Activated naive CD4-positive, alpha-beta T cell treated with anti-CD3 and anti-CD28 coated beads for 36 hours (primary cell): ENCODE measurements at regions of chrX and their contacts with region 1.

Region 1: DNA sequence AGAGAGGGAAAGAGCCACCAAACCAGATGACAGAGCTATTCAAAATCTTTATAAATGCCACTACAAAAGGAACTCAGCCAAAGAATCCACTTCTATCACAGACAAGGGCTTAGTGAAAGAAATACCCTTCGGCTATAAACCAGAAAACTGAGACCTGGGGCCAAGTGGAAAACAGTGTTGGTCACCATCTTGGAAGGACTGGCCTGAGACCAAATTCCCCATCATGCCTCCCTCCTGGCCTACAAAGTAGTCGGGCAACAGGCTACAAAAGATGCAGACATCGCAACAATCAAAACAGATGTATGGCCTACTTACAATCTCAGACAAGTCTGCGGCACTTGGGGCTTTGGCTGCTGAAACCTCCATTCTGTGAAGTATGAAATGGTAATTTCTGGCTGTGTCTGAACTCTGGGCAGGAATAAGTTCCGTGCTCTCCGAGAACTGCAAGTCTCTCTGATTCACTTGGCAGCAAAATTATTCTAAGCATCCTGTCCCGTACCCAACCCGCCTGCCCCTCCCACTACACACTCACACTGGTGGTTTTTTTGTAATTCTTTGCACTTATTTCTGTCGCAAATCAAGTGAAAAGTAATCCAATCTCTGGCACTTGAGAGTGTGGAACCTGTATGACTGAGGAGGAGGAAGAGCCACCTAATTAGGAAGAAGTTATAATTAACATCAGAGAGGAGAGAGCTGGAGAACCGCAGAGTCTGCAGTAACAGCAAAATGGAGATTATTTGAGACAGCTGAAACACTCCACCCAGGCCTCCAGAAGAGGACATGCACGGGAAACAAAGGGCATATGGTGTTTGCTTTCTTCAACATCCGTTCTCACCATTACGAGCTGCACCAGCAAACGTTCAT is 87.8 kb downstream of the SH3KBP1 start:
- DNase-seq: peak; percentile 68
- H3K4me3 Mint-ChIP-seq: peak overlapping the region; percentile 88
- H3K27ac Mint-ChIP-seq: peak overlapping the region; percentile 99
- H3K4me1 Mint-ChIP-seq: peaks cover 65% of the 10 kb centered on the region
- H3K27me3 Mint-ChIP-seq: no peaks in the 10 kb centered on the region

Region 2: GRCh38 chrX:19625612-19626011 is 173.9 kb before region 1 on chrX:
- CTCF ChIA-PET with region 1: no interaction called
- intact Hi-C with region 1: no loop called
- DNase-seq: peak; percentile 68
- H3K4me3 Mint-ChIP-seq: no peak overlapping the region
- H3K27ac Mint-ChIP-seq: peak overlapping the region; percentile 90
- H3K4me1 Mint-ChIP-seq: peaks cover 65% of the 10 kb centered on the region
- H3K27me3 Mint-ChIP-seq: no peaks in the 10 kb centered on the region

Region 3: DNA sequence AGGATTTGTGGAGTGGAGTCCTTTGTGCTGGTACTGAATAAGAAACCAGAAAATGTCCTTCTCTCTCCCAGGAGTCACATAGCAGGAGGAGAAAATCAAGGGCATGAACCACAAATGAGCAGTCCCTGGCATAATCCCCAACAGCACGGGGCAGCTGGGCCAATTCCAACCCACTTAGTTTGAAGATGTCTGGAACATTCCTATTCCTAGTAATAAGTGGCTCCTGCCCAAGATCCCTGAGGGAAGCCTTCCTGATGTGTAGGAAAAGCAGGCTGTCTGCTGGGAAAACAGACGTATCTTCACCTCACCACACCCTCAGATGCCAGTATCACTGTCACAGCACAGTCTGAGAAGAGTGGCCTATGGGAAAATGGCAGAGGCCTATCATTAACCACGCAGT is 101.4 kb before region 1 on chrX:
- CTCF ChIA-PET with region 1: no interaction called
- intact Hi-C with region 1: no loop called
- DNase-seq: no peak
- H3K4me3 Mint-ChIP-seq: no peak overlapping the region
- H3K27ac Mint-ChIP-seq: no peak overlapping the region
- H3K4me1 Mint-ChIP-seq: peaks cover 44% of the 10 kb centered on the region
- H3K27me3 Mint-ChIP-seq: no peaks in the 10 kb centered on the region

Region 4: GRCh38 chrX:19785647-19786046 is 13.9 kb before region 1 on chrX:
- CTCF ChIA-PET with region 1: interaction called, 3 read pairs
- intact Hi-C with region 1: loop called (anchors 1 kb)
- DNase-seq: peak; percentile 81
- H3K4me3 Mint-ChIP-seq: no peak overlapping the region
- H3K27ac Mint-ChIP-seq: peak overlapping the region; percentile 91
- H3K4me1 Mint-ChIP-seq: peaks cover 74% of the 10 kb centered on the region
- H3K27me3 Mint-ChIP-seq: no peaks in the 10 kb centered on the region